ENCODE measurements at regions of chr6 and their contacts with region 1.

Region 1: GRCh38 chr6:127737009-127737486 is 160.1 kb downstream of the C6orf58 start:
- DNase-seq: no peak
- ATAC-seq: peak; percentile 63 to 94 (median 78)
- H3K4me3 ChIP-seq: no peak overlapping the region
- H3K27ac ChIP-seq: no peak overlapping the region
- H3K4me1 ChIP-seq: no peaks in the 10 kb centered on the region
- H3K27me3 ChIP-seq: peaks cover 0 to 2% (median 0%) of the 10 kb centered on the region in 3 donors
- CTCF ChIP-seq: peak; percentile 67

Region 2: DNA sequence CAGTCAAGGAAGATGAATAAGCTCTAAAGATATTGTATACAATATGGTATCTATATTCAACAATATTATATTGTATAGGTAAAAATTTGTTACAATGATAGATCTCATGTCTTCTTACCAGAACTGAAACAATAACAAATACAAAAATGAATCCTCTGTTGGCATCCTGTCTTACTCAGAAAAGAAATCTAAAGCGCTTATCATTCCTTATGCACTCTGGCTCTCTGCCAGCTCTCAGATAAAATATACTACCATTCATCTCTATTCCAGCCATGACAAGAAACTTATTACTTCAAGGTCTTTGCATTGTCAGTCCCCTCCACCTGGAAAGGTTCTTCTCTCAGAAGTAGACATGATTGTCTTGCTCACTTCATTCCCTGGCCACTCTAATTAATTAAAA is 25.2 kb after region 1 on chr6:
- intact Hi-C with region 1: no loop called
- DNase-seq: no peak
- ATAC-seq: no peak
- H3K4me3 ChIP-seq: no peak overlapping the region
- H3K27ac ChIP-seq: no peak overlapping the region
- H3K4me1 ChIP-seq: no peaks in the 10 kb centered on the region
- H3K27me3 ChIP-seq: no peaks in the 10 kb centered on the region
- CTCF ChIP-seq: no peak

Region 3: DNA sequence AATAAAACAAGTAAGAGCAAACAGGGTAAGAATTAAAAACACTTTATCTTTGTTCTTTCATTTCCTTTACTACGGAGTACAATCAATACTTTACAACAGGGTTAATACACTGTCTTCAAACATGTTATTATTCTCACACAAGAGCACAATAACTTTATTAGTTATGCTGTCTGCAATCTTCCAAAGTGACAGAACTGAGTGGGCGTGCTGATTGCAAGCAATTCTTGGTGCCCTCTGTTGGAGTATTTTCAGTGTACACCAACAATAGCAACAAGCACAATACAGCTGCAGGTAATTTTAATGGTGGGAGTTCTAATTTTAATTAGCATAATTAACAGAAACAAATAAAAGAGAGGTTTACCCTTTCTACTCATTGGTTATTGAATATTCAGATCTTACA is 817.3 kb after region 1 on chr6:
- intact Hi-C with region 1: loop called in 1 of 2 experiments (anchors 5 kb)
- DNase-seq: no peak
- ATAC-seq: no peak
- H3K4me3 ChIP-seq: no peak overlapping the region
- H3K27ac ChIP-seq: no peak overlapping the region
- H3K4me1 ChIP-seq: no peaks in the 10 kb centered on the region
- H3K27me3 ChIP-seq: no peaks in the 10 kb centered on the region
- CTCF ChIP-seq: peak; percentile 29

Region 4: GRCh38 chr6:128731249-128732165 is 994.5 kb after region 1 on chr6:
- intact Hi-C with region 1: loop called (anchors 5 to 10 kb)
- DNase-seq: no peak
- ATAC-seq: peak in 2 of 4 donors; percentile 46 to 61
- H3K4me3 ChIP-seq: no peak overlapping the region
- H3K27ac ChIP-seq: no peak overlapping the region
- H3K4me1 ChIP-seq: no peaks in the 10 kb centered on the region
- H3K27me3 ChIP-seq: no peaks in the 10 kb centered on the region
- CTCF ChIP-seq: peak; percentile 46

Region 5: GRCh38 chr6:129251669-129252376 is 1514.8 kb after region 1 on chr6:
- intact Hi-C with region 1: loop called in 1 of 2 experiments (anchors 10 kb)
- DNase-seq: peak in 1 of 2 donors; percentile 14
- ATAC-seq: peak in 3 of 4 donors; percentile 7 to 79 (median 60)
- H3K4me3 ChIP-seq: no peak overlapping the region
- H3K27ac ChIP-seq: no peak overlapping the region
- H3K4me1 ChIP-seq: no peaks in the 10 kb centered on the region
- H3K27me3 ChIP-seq: no peaks in the 10 kb centered on the region
- CTCF ChIP-seq: peak; percentile 78

Measured in psoas muscle (tissue), 8 donors.